Mammary epithelial cell (primary cell): ENCODE measurements at regions of chr9 and their contacts with region 1.

Region 1: GRCh38 chr9:68427216-68427977 is 71.0 kb downstream of the PGM5 start:
- DNase-seq: no peak
- H3K4me3 ChIP-seq: no peak overlapping the region
- H3K27ac ChIP-seq: no peak overlapping the region
- H3K4me1 ChIP-seq: no peaks in the 10 kb centered on the region
- H3K27me3 ChIP-seq: no peaks in the 10 kb centered on the region
- CTCF ChIP-seq: no peak

Region 2: GRCh38 chr9:68455451-68455850 is 28.1 kb after region 1 on chr9:
- CTCF ChIA-PET with region 1: no interaction called
- dilution Hi-C with region 1: no loop called
- in situ Hi-C with region 1: no loop called
- intact Hi-C with region 1: no loop called
- DNase-seq: no peak
- H3K4me3 ChIP-seq: no peak overlapping the region
- H3K27ac ChIP-seq: no peak overlapping the region
- H3K4me1 ChIP-seq: no peaks in the 10 kb centered on the region
- H3K27me3 ChIP-seq: no peaks in the 10 kb centered on the region
- CTCF ChIP-seq: no peak

Region 3: GRCh38 chr9:68489646-68490045 is 62.2 kb after region 1 on chr9:
- CTCF ChIA-PET with region 1: no interaction called
- dilution Hi-C with region 1: no loop called
- in situ Hi-C with region 1: loop called in 1 of 2 experiments (anchors 10 kb)
- intact Hi-C with region 1: no loop called
- DNase-seq: no peak
- H3K4me3 ChIP-seq: no peak overlapping the region
- H3K27ac ChIP-seq: no peak overlapping the region
- H3K4me1 ChIP-seq: no peaks in the 10 kb centered on the region
- H3K27me3 ChIP-seq: no peaks in the 10 kb centered on the region
- CTCF ChIP-seq: no peak